Left ventricle myocardium superior (tissue), 1 donor: ENCODE measurements at regions of chr12 and their contacts with region 1.

Region 1: DNA sequence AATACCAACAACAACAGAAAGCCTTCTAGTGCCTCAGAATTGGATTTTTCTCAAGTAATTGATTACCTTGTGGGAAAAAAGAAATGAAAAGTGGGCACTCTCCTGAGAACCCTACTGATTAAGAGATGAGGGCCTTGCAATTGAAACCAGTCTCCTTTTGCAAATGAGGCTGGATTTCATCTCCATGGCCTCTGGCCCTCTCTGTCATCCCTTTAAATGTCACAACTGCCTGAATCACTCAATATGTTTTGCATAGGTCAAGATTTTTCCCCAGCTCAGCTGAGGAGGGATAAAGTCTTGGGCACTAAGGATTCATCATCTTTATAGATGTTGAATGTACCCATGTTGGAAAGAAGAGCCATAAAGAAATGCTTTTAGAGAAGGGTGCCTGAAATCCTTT is 166.4 kb downstream of the RMST start:
- DNase-seq: no peak
- ATAC-seq: no peak

Region 2: GRCh38 chr12:97292588-97292987 is 336.4 kb before region 1 on chr12:
- intact Hi-C with region 1: no loop called
- DNase-seq: no peak
- ATAC-seq: no peak

Region 3: GRCh38 chr12:97862072-97862471 is 233.1 kb after region 1 on chr12:
- intact Hi-C with region 1: loop called (anchors 5 kb)
- DNase-seq: no peak
- ATAC-seq: no peak